Dorsolateral prefrontal cortex (tissue), 120 donors: ENCODE measurements at regions of chr11 and their contacts with region 1.

Region 1: DNA sequence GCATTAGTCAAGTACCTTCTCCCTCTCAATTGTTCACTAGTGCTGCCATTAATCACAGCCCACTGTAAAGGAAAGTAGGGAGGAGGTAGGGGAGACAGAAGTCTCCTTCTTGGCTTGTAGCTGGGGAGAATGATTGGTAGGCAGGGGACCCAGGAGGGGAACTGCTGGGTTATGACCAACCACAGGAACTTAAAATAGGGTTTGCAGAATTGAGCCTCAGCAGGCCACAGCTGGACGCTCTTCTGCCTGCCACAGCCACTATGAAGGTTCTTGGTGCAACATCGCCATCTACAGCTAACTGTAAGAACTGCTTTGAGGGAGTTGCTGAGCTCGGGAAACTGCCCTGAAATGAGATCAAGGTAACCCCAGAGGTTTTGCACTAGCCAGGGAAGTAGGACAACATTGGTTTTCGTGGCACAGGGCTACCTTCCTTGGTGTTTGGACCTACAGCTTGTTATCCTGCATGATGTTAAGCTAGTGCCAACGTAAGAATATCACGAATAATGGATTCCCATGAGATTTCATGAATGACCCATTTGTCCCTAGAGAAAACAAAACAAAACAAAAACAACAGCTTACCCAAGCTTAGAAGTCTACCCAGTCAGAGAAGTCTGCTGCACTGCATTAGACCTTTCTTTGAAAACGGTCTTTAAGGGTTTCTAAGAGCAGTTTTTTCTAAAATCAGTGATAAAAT is 787.1 kb upstream of the API5 start:
- DNase-seq: peak in 9 of 10 donors; percentile 32 to 75 (median 50)
- H3K4me3 ChIP-seq: peak overlapping the region in 4 of 59 donors; percentile 23 to 32 (median 26)
- H3K27ac ChIP-seq: peak overlapping the region in 10 of 59 donors; percentile 20 to 78 (median 35)
- H3K27me3 ChIP-seq: no peaks in the 10 kb centered on the region
- CTCF ChIP-seq: peak; percentile 55 to 95 (median 86)

Region 2: DNA sequence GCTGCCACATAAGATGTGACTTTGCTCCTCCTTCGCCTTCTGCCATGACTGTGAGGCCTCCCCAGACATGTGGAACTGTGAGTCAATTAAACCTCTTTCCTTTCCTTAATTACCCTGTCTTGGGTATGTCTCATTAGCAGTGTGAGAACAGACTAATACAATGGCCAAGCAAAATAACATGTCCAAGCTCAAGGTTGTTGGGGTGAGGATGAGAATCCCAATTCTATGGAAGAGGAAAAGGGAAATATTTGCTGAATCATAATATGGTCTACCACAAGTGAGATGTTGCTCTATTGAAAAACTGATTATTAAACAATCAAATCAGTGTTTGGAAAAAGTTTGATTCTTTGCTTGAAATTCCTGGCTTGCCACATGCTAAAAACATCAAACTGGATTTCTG is 1016.6 kb before region 1 on chr11:
- intact Hi-C with region 1: loop called in 1 of 2 experiments (anchors 10 kb)
- DNase-seq: no peak
- H3K4me3 ChIP-seq: no peak overlapping the region
- H3K27ac ChIP-seq: no peak overlapping the region
- H3K27me3 ChIP-seq: no peaks in the 10 kb centered on the region
- CTCF ChIP-seq: no peak

Region 3: DNA sequence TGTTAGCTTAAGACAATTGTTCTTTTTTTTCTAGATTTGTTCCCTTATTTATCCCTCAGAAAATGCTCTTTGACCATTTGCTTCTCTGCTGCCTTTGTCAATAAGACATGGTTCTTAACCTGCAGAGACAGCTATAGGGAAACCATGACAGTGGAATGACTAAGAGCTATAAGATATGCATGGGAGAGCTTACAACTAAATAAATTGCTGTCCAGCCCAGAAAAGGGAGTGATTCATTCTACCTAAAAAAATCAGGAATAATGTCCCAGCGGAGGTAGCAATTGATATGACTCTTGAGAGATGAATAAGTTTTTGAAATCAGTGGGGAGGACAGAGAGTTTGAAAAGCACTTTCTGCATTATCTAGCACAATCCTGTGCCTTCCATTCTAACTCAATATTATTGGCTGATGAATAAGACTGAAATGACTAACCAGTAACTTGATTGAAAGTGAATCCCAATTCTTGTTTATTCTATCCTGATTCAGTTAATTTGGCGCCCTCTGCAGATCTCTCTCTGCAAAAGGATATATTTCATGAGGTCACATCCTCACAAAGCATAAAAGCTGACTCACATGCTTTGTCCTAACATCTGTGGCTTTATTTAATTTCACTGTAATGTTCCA is 106.7 kb after region 1 on chr11:
- intact Hi-C with region 1: loop called in 1 of 2 experiments (anchors 5 kb)
- DNase-seq: peak in 1 of 10 donors; percentile 62
- H3K4me3 ChIP-seq: peak overlapping the region in 13 of 59 donors; percentile 3 to 39 (median 17)
- H3K27ac ChIP-seq: peak overlapping the region in 32 of 59 donors; percentile 1 to 83 (median 60)
- H3K27me3 ChIP-seq: no peaks in the 10 kb centered on the region
- CTCF ChIP-seq: peak in 49 of 56 donors; percentile 14 to 75 (median 51)